ENCODE measurements at regions of chr20 and their contacts with region 1.

Region 1: GRCh38 chr20:60410618-60411264 is 452.5 kb downstream of the CDH26 start:
- DNase-seq: no peak
- ATAC-seq: no peak
- H3K4me3 ChIP-seq: no peak overlapping the region
- H3K27ac ChIP-seq: no peak overlapping the region
- H3K4me1 ChIP-seq: no peaks in the 10 kb centered on the region
- H3K27me3 ChIP-seq: no peaks in the 10 kb centered on the region
- CTCF ChIP-seq: no peak

Region 2: GRCh38 chr20:59880198-59880597 is 530.5 kb before region 1 on chr20:
- intact Hi-C with region 1: no loop called
- DNase-seq: no peak
- ATAC-seq: no peak
- H3K4me3 ChIP-seq: no peak overlapping the region
- H3K27ac ChIP-seq: no peak overlapping the region
- H3K4me1 ChIP-seq: no peaks in the 10 kb centered on the region
- H3K27me3 ChIP-seq: no peaks in the 10 kb centered on the region
- CTCF ChIP-seq: no peak

Region 3: DNA sequence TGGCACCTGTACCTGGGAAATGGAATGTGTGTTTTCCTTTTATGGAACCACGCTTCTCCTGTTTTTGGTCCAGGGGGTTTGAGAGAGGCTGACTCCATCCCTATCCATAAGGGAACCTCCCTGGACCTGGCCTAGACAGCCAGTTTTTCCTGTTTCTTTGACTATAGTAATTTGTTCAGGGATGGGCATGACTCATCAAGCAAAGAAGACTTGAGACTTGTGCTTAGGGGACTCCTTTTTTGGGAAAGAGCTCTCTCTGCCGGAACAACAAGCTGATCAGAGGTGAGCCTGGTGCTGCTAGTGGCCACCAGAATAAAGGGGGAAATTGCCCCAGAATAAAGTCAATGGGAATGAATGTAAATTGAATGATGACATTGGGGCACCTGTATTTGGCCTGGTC is 58.7 kb before region 1 on chr20:
- intact Hi-C with region 1: loop called in 1 of 2 experiments (anchors 10 kb)
- DNase-seq: no peak
- ATAC-seq: no peak
- H3K4me3 ChIP-seq: no peak overlapping the region
- H3K27ac ChIP-seq: no peak overlapping the region
- H3K4me1 ChIP-seq: no peaks in the 10 kb centered on the region
- H3K27me3 ChIP-seq: no peaks in the 10 kb centered on the region
- CTCF ChIP-seq: no peak

Region 4: GRCh38 chr20:60395991-60396390 is 14.8 kb before region 1 on chr20:
- intact Hi-C with region 1: no loop called
- DNase-seq: no peak
- ATAC-seq: no peak
- H3K4me3 ChIP-seq: no peak overlapping the region
- H3K27ac ChIP-seq: no peak overlapping the region
- H3K4me1 ChIP-seq: no peaks in the 10 kb centered on the region
- H3K27me3 ChIP-seq: no peaks in the 10 kb centered on the region
- CTCF ChIP-seq: no peak